ENCODE measurements at regions of chr17 and their contacts with region 1.

Region 1: GRCh38 chr17:49343273-49343672 is 18.8 kb downstream of the ZNF652 start:
- DNase-seq: no peak
- ATAC-seq: no peak
- H3K4me3 ChIP-seq: no peak overlapping the region
- H3K27ac ChIP-seq: no peak overlapping the region
- H3K4me1 ChIP-seq: peaks cover 5% of the 10 kb centered on the region; the same call in 1 of the 2 replicates
- H3K27me3 ChIP-seq: no peaks in the 10 kb centered on the region
- CTCF ChIP-seq: no peak

Region 2: GRCh38 chr17:49407981-49408501 is 64.8 kb after region 1 on chr17:
- CTCF ChIA-PET with region 1: interaction called, 11 read pairs
- POLR2A ChIA-PET with region 1: no interaction called
- in situ Hi-C with region 1: no loop called
- intact Hi-C with region 1: no loop called
- DNase-seq: peak; percentile 36
- ATAC-seq: peak; percentile 94
- H3K4me3 ChIP-seq: no peak overlapping the region
- H3K27ac ChIP-seq: no peak overlapping the region
- H3K4me1 ChIP-seq: 0 out of 2 replicates have a peak, but pooled peaks cover 4% of the 10 kb centered on the region
- H3K27me3 ChIP-seq: no peaks in the 10 kb centered on the region
- CTCF ChIP-seq: peak; percentile 95

Measured in Panc1 (cell line).